OCI-LY7 (cell line): ENCODE measurements at regions of chr17 and their contacts with region 1.

Region 1: DNA sequence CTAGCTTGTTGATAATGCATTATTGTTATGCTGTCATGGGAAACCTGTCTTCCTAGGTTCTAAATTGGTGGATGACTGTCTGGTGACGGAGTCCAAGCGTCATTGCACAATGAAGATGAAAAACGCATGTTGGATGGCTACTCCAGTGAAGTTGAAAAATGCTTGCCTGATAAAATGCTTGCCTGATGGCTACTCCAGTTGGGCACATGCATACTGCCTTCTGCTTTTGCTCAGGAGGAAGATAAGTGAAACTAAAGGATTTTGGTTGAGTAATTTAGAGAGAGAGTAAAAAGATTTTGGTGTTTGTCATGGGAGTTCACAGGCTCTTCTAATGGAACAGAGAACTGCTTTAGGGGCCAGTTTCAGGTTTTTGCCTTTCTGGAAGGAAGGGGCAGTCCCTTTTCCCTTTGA is 118.6 kb downstream of the PRKCA start:
- DNase-seq: no peak
- H3K4me3 ChIP-seq: no peak overlapping the region
- H3K27ac ChIP-seq: no peak overlapping the region
- H3K4me1 ChIP-seq: peaks cover under 1% of the 10 kb centered on the region
- CTCF ChIP-seq: no peak

Region 2: GRCh38 chr17:66337866-66338485 is 83.0 kb before region 1 on chr17:
- CTCF ChIA-PET with region 1: no interaction called
- POLR2A ChIA-PET with region 1: no interaction called
- intact Hi-C with region 1: no loop called
- DNase-seq: no peak
- H3K4me3 ChIP-seq: no peak overlapping the region
- H3K27ac ChIP-seq: no peak overlapping the region
- H3K4me1 ChIP-seq: no peaks in the 10 kb centered on the region
- CTCF ChIP-seq: no peak

Region 3: GRCh38 chr17:66405836-66406677 is 14.9 kb before region 1 on chr17:
- CTCF ChIA-PET with region 1: no interaction called
- POLR2A ChIA-PET with region 1: interaction called, 11 read pairs
- intact Hi-C with region 1: no loop called
- DNase-seq: no peak
- H3K4me3 ChIP-seq: no peak overlapping the region
- H3K27ac ChIP-seq: no peak overlapping the region
- H3K4me1 ChIP-seq: no peaks in the 10 kb centered on the region
- CTCF ChIP-seq: no peak

Region 4: DNA sequence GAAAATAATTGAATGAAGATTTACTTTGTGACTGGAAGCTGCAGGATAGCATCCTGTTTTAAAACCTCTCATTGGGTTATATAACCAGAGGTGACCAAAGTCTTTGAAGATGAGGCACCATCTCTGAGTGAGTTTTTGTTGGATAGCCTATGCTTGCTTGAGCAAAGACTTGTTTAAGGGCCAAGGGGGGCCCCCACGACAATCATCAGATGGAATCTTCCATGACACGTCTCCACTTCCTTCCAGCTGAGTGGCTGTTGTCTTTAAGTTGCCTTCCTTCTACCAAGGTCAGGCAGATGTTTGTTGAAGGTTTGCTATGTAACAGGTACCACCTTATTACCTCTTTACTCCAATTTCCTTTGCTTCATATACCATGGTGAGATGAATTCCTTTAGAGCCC is 70.2 kb after region 1 on chr17:
- CTCF ChIA-PET with region 1: no interaction called
- POLR2A ChIA-PET with region 1: no interaction called
- intact Hi-C with region 1: no loop called
- DNase-seq: peak; percentile 24
- H3K4me3 ChIP-seq: no peak overlapping the region
- H3K27ac ChIP-seq: no peak overlapping the region
- H3K4me1 ChIP-seq: no peaks in the 10 kb centered on the region
- CTCF ChIP-seq: no peak

Region 5: DNA sequence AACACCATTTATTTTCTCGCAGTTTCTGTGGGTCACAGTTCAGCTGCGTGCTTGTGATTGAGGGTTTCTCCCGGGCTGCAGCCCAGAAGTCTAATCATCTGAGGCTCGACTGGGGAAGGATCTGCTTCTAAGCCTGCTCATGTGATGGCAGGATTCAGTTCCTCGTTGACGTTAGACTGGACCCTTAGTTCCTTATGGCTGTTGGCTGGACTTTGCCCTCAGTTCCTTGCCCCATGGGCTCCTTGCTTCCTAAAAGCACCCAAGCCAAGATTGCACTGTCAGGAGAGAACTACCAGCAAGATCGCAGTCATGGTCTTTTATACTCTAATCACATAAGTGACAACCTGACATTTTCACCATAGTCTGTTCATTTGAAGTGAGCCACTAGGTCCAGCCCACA is 131.4 kb after region 1 on chr17:
- CTCF ChIA-PET with region 1: no interaction called
- POLR2A ChIA-PET with region 1: no interaction called
- intact Hi-C with region 1: no loop called
- DNase-seq: no peak
- H3K4me3 ChIP-seq: no peak overlapping the region
- H3K27ac ChIP-seq: no peak overlapping the region
- H3K4me1 ChIP-seq: no peaks in the 10 kb centered on the region
- CTCF ChIP-seq: no peak